Activated T-helper 1 cell treated with anti-CD3 and anti-CD28 coated beads, Interleukin-12 subunit alpha, Interleukin-12 subunit beta, Interleukin-2, Interleukin-4 antibody, amounts not matched to agents 30 ng/mL and 10 ng/mL and 1 ng/mL, durations not matched to agents 14 hours and 24 hours and 36 hours (primary cell): ENCODE measurements at regions of chr6 and their contacts with region 1.

Region 1: GRCh38 chr6:159929819-159930218 is 39.0 kb downstream of the MAS1 start:
- DNase-seq: no peak
- H3K4me3 Mint-ChIP-seq: no peak overlapping the region
- H3K27ac Mint-ChIP-seq: peak overlapping the region; percentile 63
- H3K4me1 Mint-ChIP-seq: peaks cover 28% of the 10 kb centered on the region
- H3K27me3 Mint-ChIP-seq: peaks cover 7% of the 10 kb centered on the region

Region 2: GRCh38 chr6:158718461-158719046 is 1211.3 kb before region 1 on chr6:
- intact Hi-C with region 1: loop called (anchors 2 kb)
- DNase-seq: no peak
- H3K4me3 Mint-ChIP-seq: no peak overlapping the region
- H3K27ac Mint-ChIP-seq: no peak overlapping the region
- H3K4me1 Mint-ChIP-seq: peaks cover 69% of the 10 kb centered on the region
- H3K27me3 Mint-ChIP-seq: peaks cover 2% of the 10 kb centered on the region

Region 3: DNA sequence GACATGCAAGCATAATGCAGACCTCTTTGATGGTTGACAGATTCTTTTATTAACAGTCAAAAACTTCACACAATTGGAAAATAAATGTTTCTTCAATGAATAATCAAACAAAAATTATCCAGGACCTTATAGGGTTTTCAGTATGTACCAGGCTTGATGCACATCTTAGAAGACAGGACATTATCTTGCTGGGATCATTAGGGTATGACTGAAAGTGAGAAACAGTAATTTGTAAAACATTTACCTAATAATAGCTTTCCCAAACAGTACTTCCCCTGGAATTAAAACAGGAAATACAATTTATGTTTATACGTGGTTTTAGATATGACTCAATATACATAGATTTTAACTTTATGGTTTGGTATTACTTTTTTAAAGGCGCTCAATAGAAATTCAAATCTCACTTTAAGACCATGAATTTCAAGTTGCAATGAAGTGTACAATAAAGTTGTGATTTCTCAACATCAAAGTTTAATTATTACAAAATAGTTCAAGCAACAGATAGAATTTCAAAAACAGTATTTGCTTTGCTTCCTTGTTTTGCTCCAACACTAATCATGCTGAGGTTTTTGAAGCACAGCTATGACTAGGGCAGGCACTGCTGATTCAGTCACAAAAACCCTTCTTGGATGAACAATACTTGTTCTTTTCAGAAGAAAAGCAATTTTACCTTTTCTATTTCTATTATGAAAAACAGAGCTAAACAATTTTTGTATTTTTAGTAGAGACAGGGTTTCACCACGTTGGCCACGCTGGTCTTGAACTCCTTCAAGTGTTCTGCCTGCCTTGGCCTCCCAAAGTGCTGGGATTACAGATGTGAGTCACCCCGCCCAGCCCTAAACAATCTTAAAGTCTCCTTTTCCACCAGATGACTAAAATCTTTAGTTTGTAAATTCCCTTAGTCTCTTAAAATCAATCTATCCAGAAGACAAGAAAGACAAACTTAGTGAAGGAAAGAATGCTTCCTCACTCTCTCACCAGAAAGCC is 250.4 kb before region 1 on chr6:
- intact Hi-C with region 1: loop called (anchors 1 kb)
- DNase-seq: no peak
- H3K4me3 Mint-ChIP-seq: no peak overlapping the region
- H3K27ac Mint-ChIP-seq: peak overlapping the region; percentile 82
- H3K4me1 Mint-ChIP-seq: peaks cover 27% of the 10 kb centered on the region
- H3K27me3 Mint-ChIP-seq: no peaks in the 10 kb centered on the region

Region 4: DNA sequence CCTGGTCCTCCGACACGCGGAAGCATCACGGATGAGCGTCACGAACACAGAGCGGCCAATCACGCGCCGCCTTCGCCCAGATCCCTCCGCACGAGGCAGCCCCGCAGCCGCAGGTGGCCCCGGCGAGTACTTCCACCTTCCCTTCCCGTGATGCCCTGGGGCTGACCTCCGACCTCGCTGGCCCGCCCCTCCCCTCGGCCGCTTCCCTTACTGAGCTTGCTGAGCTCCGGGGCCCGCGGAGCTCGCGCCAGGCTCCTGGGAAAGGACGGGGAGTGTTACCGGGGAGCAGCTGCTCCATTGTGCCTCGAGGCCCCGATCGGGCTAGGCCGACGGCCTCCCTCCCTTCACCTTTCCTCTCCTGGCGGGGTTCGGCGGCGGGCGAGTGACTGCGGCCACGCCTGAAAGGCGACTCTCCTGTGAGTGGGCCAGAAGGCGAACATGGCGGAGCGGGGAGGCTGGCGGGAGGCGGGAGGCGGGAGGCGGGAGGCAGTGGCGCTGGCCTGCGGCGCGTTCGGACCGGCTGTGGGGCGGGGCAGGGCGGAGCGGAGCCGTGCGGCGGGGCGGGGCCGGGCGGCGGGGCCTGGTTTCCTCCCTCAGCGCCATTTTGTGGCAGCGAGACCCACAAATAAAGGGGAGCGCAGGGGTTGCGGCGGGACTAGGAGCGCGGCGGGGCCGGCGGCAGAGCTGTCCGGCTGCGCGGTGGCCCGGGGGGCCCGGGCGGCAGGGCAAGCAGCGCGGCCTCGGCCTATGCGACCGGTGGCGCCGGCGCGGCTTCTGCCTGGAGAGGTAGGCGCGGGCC is 202.7 kb before region 1 on chr6 and contains the start of gene WTAP:
- intact Hi-C with region 1: loop called (anchors 1 kb)
- DNase-seq: peak; percentile 95
- H3K4me3 Mint-ChIP-seq: peak within 1 kb of the TSS; percentile 93
- H3K27ac Mint-ChIP-seq: peak within 1 kb of the TSS; percentile 96
- H3K4me1 Mint-ChIP-seq: peaks cover 41% of the 10 kb centered on the region
- H3K27me3 Mint-ChIP-seq: no peaks in the 10 kb centered on the region
- total RNA-seq, gene WTAP: 125 and 136 TPM in 2 replicates

Region 5: DNA sequence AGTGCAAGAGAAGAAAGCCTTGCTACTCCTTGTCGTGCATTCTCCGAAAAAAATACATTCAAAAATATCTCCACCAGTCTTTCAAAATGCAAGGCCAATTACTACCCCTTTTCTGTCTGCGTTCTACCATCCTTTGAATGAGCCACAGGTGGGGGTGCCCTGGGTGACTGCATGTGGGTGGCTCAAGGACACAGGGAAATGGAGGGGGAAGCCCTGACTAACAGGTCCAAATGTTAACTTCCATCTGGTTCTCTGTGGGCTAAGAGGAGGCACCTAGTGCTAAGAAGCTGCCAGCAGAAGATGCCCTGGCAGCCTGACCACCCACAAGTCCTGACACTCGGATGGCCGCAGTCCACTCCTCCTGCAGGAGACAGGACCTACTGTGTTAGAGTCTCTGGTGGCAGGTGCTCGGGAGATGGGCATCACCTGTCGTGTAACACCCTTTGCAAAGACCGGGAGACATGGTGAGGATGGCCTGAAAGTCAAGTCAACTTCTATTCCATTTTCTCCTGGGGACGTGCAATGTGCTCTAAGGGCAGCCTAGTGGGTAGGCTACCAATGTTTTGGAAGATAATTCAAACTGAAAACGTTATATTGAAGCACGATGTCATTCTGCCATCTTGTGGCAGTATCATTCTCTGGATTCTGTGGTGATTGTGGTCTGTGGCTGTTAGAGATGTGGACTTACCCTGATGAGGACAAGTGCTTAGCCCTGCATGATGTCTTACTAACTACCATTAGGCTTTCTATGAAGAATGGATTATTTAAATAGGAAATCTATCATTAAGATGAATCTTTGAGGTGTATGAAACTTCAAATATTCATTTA is 11.7 kb after region 1 on chr6:
- intact Hi-C with region 1: loop called (anchors 1 kb)
- DNase-seq: peak; percentile 26
- H3K4me3 Mint-ChIP-seq: no peak overlapping the region
- H3K27ac Mint-ChIP-seq: no peak overlapping the region
- H3K4me1 Mint-ChIP-seq: peaks cover 10% of the 10 kb centered on the region
- H3K27me3 Mint-ChIP-seq: peaks cover 23% of the 10 kb centered on the region

Region 6: DNA sequence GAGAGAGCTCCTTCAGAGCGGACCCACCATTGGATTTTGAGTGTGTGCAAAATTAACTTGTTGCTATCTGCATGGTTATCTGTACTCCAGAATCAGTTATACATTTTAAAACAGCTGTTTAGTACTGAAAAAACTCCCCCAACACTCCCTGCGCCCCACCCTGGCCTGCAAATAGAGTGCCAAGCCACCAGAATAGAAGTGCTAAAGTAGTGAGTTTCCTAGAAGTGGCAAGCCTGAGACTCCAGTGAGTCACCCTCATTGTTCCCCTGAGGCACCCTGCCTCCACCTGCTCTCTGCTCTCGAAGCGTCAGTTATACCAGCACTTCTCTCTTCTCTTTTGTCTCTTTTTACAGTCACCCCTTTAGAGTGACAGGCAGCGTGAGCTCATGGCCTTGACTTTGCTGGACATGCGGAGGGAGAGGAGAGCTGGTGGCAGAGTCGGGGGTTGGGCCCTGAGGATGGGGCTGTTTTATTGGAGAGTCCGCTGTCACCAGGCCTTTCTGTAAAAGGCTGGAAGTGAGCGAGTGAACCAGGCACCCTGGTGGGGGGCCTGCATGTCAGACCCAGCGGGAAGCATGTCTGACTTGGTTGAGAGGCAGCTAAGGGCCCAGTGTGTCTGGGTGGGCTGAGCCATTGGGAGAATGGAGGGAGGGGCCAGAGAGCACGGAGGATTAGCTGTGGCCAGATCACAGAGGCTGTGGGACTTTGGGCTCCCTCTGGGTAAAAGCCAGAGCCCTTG is 49.5 kb after region 1 on chr6:
- intact Hi-C with region 1: loop called (anchors 1 kb)
- DNase-seq: peak; percentile 58
- H3K4me3 Mint-ChIP-seq: peak overlapping the region; percentile 86
- H3K27ac Mint-ChIP-seq: peak overlapping the region; percentile 97
- H3K4me1 Mint-ChIP-seq: peaks cover 89% of the 10 kb centered on the region
- H3K27me3 Mint-ChIP-seq: no peaks in the 10 kb centered on the region

Region 7: GRCh38 chr6:160462551-160463109 is 532.8 kb after region 1 on chr6:
- intact Hi-C with region 1: loop called (anchors 1 kb)
- DNase-seq: peak; percentile 76
- H3K4me3 Mint-ChIP-seq: peak overlapping the region; percentile 34
- H3K27ac Mint-ChIP-seq: peak overlapping the region; percentile 71
- H3K4me1 Mint-ChIP-seq: peaks cover 79% of the 10 kb centered on the region
- H3K27me3 Mint-ChIP-seq: peaks cover 14% of the 10 kb centered on the region